ENCODE measurements at regions of chr19 and their contacts with region 1.

Region 1: GRCh38 chr19:46990991-46991676 is 28.5 kb upstream of the NPAS1 start:
- DNase-seq: peak; percentile 72
- H3K27ac ChIP-seq: peak overlapping the region; percentile 65
- CTCF ChIP-seq: peak; percentile 84

Region 2: GRCh38 chr19:46856050-46857022 is 134.8 kb before region 1 on chr19:
- CTCF ChIA-PET with region 1: interaction called, 12 read pairs
- POLR2A ChIA-PET with region 1: no interaction called
- DNase-seq: peak; percentile 95
- H3K27ac ChIP-seq: peak overlapping the region; percentile 99
- CTCF ChIP-seq: peak; percentile 89

Region 3: GRCh38 chr19:47002107-47002766 is 11.1 kb after region 1 on chr19:
- CTCF ChIA-PET with region 1: interaction called, 13 read pairs
- POLR2A ChIA-PET with region 1: no interaction called
- DNase-seq: no peak
- H3K27ac ChIP-seq: peak overlapping the region; percentile 9; the same call in 1 of the 2 replicates
- CTCF ChIP-seq: no peak

Region 4: GRCh38 chr19:47032171-47032811 is 41.2 kb after region 1 on chr19:
- CTCF ChIA-PET with region 1: no interaction called
- POLR2A ChIA-PET with region 1: no interaction called
- DNase-seq: peak; percentile 71
- H3K27ac ChIP-seq: no peak overlapping the region
- CTCF ChIP-seq: peak; percentile 92

Measured in RWPE1 (cell line).